IMR-90 (cell line): ENCODE measurements at regions of chr4 and their contacts with region 1.

Region 1: DNA sequence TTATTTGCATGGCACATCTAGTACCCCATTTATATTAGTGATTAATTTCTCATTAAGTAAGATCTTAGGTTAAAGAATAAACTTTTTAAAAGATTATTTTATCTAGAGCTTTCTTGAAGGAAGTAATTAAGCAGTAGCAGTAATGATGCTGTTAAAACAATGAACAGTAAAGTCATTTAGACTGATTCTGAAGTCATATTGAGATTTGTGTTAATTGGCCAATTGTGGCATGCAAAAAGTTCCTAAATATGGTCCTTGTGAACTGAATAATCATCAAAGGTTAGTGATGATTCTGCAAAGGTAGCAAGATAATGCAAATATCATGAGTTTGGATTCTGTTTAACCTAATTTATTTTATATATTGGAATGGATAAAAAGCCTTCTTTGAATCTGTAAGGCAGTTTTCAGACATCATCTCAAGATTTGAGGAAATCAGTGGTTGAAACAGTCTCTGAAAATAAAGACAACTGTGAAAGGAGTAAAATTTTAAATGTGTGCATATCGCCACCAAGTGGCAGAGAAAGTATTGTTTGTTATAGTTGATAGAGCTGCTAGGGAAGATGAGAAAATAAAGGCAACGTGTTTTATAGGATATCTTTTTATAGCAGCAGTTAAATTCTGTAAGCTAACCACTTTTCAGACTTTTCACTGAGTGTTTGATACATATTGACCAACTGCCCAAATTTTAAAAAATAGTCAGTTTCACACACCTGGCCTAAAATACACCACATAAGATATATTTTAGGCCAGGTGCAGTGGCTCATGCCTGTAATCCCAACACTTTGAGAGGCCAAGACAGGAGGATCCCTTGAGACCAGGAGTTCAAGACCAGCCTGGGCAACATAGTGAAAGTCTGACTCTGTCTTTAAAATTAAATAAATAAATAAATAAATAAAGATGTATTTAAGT is 79.6 kb downstream of the CCKAR start:
- DNase-seq: peak; percentile 63
- ATAC-seq: peak; percentile 68
- H3K4me3 ChIP-seq: no peak overlapping the region
- H3K27ac ChIP-seq: no peak overlapping the region
- H3K4me1 ChIP-seq: peaks cover 10% of the 10 kb centered on the region
- H3K27me3 ChIP-seq: no peaks in the 10 kb centered on the region
- CTCF ChIP-seq: peak; percentile 75
- POLR2A ChIP-seq: no peak
- RAD21 ChIP-seq: peak; percentile 69

Region 2: GRCh38 chr4:25925486-25926201 is 485.0 kb before region 1 on chr4:
- CTCF ChIA-PET with region 1: no interaction called
- POLR2A ChIA-PET with region 1: no interaction called
- dilution Hi-C with region 1: no loop called
- in situ Hi-C with region 1: no loop called
- intact Hi-C with region 1: loop called (anchors 10 kb)
- DNase-seq: peak; percentile 45
- ATAC-seq: peak; percentile 81
- H3K4me3 ChIP-seq: no peak overlapping the region
- H3K27ac ChIP-seq: no peak overlapping the region
- H3K4me1 ChIP-seq: peaks cover 4% of the 10 kb centered on the region
- H3K27me3 ChIP-seq: no peaks in the 10 kb centered on the region
- CTCF ChIP-seq: peak; percentile 62
- POLR2A ChIP-seq: no peak
- RAD21 ChIP-seq: peak; percentile 66

Region 3: DNA sequence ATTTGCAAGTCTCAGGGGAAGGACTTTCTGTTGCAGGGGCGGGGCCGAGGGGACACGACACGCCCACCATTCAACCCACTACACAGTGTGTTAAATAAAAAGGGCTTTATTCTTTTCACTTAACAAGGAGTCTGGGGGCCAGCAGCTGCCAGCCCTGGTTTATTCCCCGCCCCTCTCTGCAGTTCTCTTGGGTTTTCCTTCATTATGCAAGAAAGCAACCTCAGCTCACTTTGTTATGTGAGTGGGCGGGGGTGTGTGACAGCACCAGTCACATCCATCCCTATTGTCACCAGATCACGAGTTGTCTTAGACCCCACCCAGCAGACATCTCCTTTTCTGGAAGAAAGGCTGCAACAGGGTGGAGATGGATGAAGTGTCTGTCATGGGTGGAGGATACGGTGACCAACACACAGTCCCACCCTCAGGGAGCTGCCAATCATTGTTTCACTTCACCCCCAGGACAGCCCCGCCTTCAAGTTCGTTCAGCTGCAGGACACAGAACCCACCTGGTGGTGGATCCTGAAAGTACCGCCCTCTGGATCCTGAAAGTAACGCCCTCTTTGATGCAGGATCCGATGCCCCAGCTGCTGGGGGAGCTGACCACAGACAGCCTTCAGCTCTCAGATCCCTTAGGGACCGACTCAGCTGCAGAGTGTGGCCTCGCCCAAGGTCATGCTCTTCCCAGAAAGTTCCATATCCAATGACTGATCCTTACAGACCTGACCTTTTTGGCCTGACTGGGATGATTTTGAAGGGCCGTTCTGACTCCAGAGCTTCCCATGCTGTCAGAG is 417.0 kb before region 1 on chr4:
- CTCF ChIA-PET with region 1: no interaction called
- POLR2A ChIA-PET with region 1: no interaction called
- dilution Hi-C with region 1: no loop called
- in situ Hi-C with region 1: loop called (anchors 5 kb)
- intact Hi-C with region 1: loop called (anchors 1 kb)
- DNase-seq: no peak
- ATAC-seq: no peak
- H3K4me3 ChIP-seq: no peak overlapping the region
- H3K27ac ChIP-seq: no peak overlapping the region
- H3K4me1 ChIP-seq: 0 out of 2 replicates have a peak, but pooled peaks cover 2% of the 10 kb centered on the region
- H3K27me3 ChIP-seq: no peaks in the 10 kb centered on the region
- CTCF ChIP-seq: 0 out of 2 replicates have a peak, but pooled peaks have one; percentile 8
- POLR2A ChIP-seq: no peak
- RAD21 ChIP-seq: no peak

Region 4: GRCh38 chr4:26028793-26029567 is 381.7 kb before region 1 on chr4:
- CTCF ChIA-PET with region 1: no interaction called
- POLR2A ChIA-PET with region 1: no interaction called
- dilution Hi-C with region 1: no loop called
- in situ Hi-C with region 1: loop called (anchors 10 kb)
- intact Hi-C with region 1: loop called (anchors 2 kb)
- DNase-seq: peak; percentile 58
- ATAC-seq: peak; percentile 79
- H3K4me3 ChIP-seq: no peak overlapping the region
- H3K27ac ChIP-seq: no peak overlapping the region
- H3K4me1 ChIP-seq: peaks cover 19% of the 10 kb centered on the region
- H3K27me3 ChIP-seq: peaks cover 3% of the 10 kb centered on the region
- CTCF ChIP-seq: peak; percentile 77
- POLR2A ChIP-seq: no peak
- RAD21 ChIP-seq: peak; percentile 93

Region 5: GRCh38 chr4:26081795-26082498 is 328.7 kb before region 1 on chr4:
- CTCF ChIA-PET with region 1: no interaction called
- POLR2A ChIA-PET with region 1: no interaction called
- dilution Hi-C with region 1: no loop called
- in situ Hi-C with region 1: no loop called
- intact Hi-C with region 1: loop called (anchors 2 kb)
- DNase-seq: peak; percentile 52
- ATAC-seq: no peak
- H3K4me3 ChIP-seq: no peak overlapping the region
- H3K27ac ChIP-seq: no peak overlapping the region
- H3K4me1 ChIP-seq: peaks cover 15% of the 10 kb centered on the region
- H3K27me3 ChIP-seq: no peaks in the 10 kb centered on the region
- CTCF ChIP-seq: peak; percentile 57
- POLR2A ChIP-seq: no peak
- RAD21 ChIP-seq: peak; percentile 58

Region 6: GRCh38 chr4:26171941-26172340 is 238.7 kb before region 1 on chr4:
- CTCF ChIA-PET with region 1: no interaction called
- POLR2A ChIA-PET with region 1: no interaction called
- dilution Hi-C with region 1: no loop called
- in situ Hi-C with region 1: no loop called
- intact Hi-C with region 1: loop called (anchors 5 kb)
- DNase-seq: peak; percentile 100
- ATAC-seq: peak; percentile 73
- H3K4me3 ChIP-seq: no peak overlapping the region
- H3K27ac ChIP-seq: peak overlapping the region; percentile 87
- H3K4me1 ChIP-seq: peaks cover 26% of the 10 kb centered on the region
- H3K27me3 ChIP-seq: no peaks in the 10 kb centered on the region
- CTCF ChIP-seq: no peak
- POLR2A ChIP-seq: no peak
- RAD21 ChIP-seq: peak; percentile 22

Region 7: GRCh38 chr4:26330186-26330787 is 80.4 kb before region 1 on chr4:
- CTCF ChIA-PET with region 1: interaction called, 11 read pairs
- POLR2A ChIA-PET with region 1: no interaction called
- dilution Hi-C with region 1: no loop called
- in situ Hi-C with region 1: no loop called
- intact Hi-C with region 1: loop called (anchors 1 kb)
- DNase-seq: peak; percentile 68
- ATAC-seq: no peak
- H3K4me3 ChIP-seq: no peak overlapping the region
- H3K27ac ChIP-seq: no peak overlapping the region
- H3K4me1 ChIP-seq: peaks cover 13% of the 10 kb centered on the region
- H3K27me3 ChIP-seq: no peaks in the 10 kb centered on the region
- CTCF ChIP-seq: peak; percentile 61
- POLR2A ChIP-seq: no peak
- RAD21 ChIP-seq: peak; percentile 67